ENCODE measurements at regions of chr18 and their contacts with region 1.

Region 1: GRCh38 chr18:8988261-8988871 is 114.1 kb upstream of the NDUFV2 start:
- DNase-seq: peak; percentile 69
- H3K4me3 ChIP-seq: no peak overlapping the region
- H3K27ac ChIP-seq: no peak overlapping the region
- H3K4me1 ChIP-seq: no peaks in the 10 kb centered on the region
- H3K27me3 ChIP-seq: no peaks in the 10 kb centered on the region
- CTCF ChIP-seq: peak; percentile 84

Region 2: GRCh38 chr18:8367217-8367988 is 621.0 kb before region 1 on chr18:
- CTCF ChIA-PET with region 1: no interaction called
- POLR2A ChIA-PET with region 1: no interaction called
- intact Hi-C with region 1: no loop called
- DNase-seq: peak; percentile 7
- H3K4me3 ChIP-seq: no peak overlapping the region
- H3K27ac ChIP-seq: no peak overlapping the region
- H3K4me1 ChIP-seq: no peaks in the 10 kb centered on the region
- H3K27me3 ChIP-seq: peaks cover 82% of the 10 kb centered on the region
- CTCF ChIP-seq: peak; percentile 53

Region 3: GRCh38 chr18:8478166-8478967 is 510.0 kb before region 1 on chr18:
- CTCF ChIA-PET with region 1: interaction called, 3 read pairs
- POLR2A ChIA-PET with region 1: no interaction called
- intact Hi-C with region 1: loop called (anchors 1 kb)
- DNase-seq: peak; percentile 70
- H3K4me3 ChIP-seq: no peak overlapping the region
- H3K27ac ChIP-seq: no peak overlapping the region
- H3K4me1 ChIP-seq: no peaks in the 10 kb centered on the region
- H3K27me3 ChIP-seq: peaks cover 56% of the 10 kb centered on the region
- CTCF ChIP-seq: peak; percentile 84

Region 4: DNA sequence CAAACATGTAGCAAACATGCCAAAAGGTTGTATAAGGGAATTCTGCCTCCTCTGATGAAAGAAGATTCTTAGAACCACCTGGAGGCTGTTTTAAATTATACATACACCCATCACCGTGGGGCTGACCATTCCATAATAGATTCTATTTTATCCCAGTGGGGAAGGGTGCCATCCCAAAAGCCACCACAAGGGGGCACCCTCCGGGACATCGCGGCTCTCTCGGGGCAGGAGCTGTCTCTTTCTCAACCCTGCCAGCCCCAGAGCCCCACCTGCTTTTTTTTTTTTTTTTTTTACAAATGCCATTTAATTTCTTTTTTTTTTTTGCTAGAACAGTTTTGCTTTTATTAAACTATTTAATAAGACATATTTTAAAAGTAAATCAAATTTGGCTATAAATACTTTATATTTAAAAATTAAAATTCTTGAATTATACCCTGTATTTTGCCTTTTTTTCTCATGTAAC is 291.6 kb before region 1 on chr18:
- CTCF ChIA-PET with region 1: interaction called, 31 read pairs
- POLR2A ChIA-PET with region 1: no interaction called
- intact Hi-C with region 1: loop called (anchors 1 kb)
- DNase-seq: peak; percentile 71
- H3K4me3 ChIP-seq: no peak overlapping the region
- H3K27ac ChIP-seq: no peak overlapping the region
- H3K4me1 ChIP-seq: no peaks in the 10 kb centered on the region
- H3K27me3 ChIP-seq: no peaks in the 10 kb centered on the region
- CTCF ChIP-seq: peak; percentile 92

Region 5: GRCh38 chr18:9147440-9148202 is 159.3 kb after region 1 on chr18:
- CTCF ChIA-PET with region 1: no interaction called
- POLR2A ChIA-PET with region 1: no interaction called
- intact Hi-C with region 1: loop called (anchors 5 kb)
- DNase-seq: peak; percentile 76
- H3K4me3 ChIP-seq: no peak overlapping the region
- H3K27ac ChIP-seq: no peak overlapping the region
- H3K4me1 ChIP-seq: peaks cover 4% of the 10 kb centered on the region
- H3K27me3 ChIP-seq: no peaks in the 10 kb centered on the region
- CTCF ChIP-seq: peak; percentile 80

Measured in A673 (cell line).